Dendritic cell treated with granulocyte-macrophage colony-stimulating factor and Interleukin-4, amounts not matched to agents 40 ng/mL and 50 ng/mL, for 4 days (primary cell): ENCODE measurements at regions of chr19 and their contacts with region 1.

Region 1: DNA sequence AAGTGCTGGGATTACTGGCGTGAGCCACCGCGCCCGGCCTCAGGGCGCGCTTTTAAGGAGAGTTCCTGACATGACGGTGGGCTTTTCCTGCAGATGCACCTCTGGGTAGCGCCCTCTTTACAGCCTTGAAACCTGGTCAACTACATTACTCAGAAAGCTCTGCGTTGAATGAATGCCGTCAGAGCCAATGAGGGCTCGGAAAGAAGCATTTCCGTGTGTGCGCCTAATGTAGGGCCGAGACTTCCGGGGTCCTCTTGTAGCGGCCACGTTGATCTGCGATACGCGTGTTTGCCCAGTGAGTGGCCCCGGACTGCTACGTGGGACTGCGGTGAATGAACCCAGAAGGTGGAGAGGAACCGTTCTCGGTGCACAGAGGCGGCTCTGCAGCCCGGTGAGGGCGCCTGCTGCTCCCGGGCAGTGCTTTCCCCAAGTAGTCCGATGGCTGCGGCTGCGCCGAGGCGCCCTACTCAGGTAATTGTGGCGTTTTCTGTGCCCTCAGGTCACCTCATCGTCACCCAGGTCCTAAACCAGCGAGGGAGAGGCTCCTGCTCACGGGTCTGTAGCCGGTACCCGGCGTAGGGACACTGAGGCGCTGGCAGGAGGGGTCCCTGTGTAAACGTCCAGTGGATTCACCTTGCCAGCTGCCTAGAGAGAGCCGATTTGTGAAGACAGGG is 4.9 kb upstream of the ZNF552 start:
- H3K4me3 Mint-ChIP-seq: peak overlapping the region; percentile 94
- H3K27ac Mint-ChIP-seq: peak overlapping the region; percentile 91
- H3K4me1 Mint-ChIP-seq: peaks cover 48% of the 10 kb centered on the region
- H3K27me3 Mint-ChIP-seq: no peaks in the 10 kb centered on the region

Region 2: GRCh38 chr19:57719901-57720519 is 99.6 kb before region 1 on chr19:
- intact Hi-C with region 1: loop called (anchors 5 kb)
- H3K4me3 Mint-ChIP-seq: no peak overlapping the region
- H3K27ac Mint-ChIP-seq: no peak overlapping the region
- H3K4me1 Mint-ChIP-seq: no peaks in the 10 kb centered on the region
- H3K27me3 Mint-ChIP-seq: no peaks in the 10 kb centered on the region

Region 3: DNA sequence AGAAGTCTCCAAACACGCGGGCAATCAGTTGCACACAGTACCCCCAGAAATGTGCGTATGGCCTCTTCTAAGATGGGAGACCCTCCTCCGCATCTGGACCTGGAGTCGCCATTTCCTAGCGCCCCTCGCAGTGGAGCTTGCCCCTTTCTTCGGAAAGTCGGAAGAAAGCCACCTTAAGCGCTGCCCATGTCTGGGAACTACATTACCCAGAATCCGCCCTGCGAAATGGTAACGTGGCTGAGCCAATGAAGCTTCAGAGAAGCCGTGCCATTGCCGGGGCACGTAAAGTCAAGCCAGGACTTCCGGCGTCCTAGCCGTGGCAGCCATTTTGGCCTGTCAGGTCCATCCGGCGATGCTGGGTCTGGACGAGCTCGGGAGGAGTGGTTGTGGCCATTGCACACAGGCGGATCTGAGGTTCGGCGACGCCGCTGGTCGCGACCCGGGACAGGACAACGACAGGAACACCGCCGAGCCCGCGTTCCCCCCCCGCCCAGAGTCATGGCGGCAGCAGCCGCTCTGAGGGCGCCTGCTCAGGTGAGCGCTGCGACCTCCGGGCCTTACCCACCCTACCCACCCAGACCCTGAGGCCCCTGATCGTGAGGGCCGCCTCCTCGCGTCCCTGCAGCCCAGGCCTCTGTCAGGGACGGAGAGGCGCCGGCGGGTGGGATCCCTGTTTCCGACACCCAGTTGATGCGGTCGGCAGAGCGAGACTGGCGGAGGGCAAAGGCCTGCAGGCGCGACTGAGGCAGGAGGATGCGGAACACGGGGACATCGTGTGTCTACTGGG is 50.1 kb before region 1 on chr19 and contains the start of gene ZNF586:
- intact Hi-C with region 1: loop called (anchors 10 kb)
- H3K4me3 Mint-ChIP-seq: peak within 1 kb of the TSS; percentile 90
- H3K27ac Mint-ChIP-seq: peak within 1 kb of the TSS; percentile 88
- H3K4me1 Mint-ChIP-seq: peaks cover 24% of the 10 kb centered on the region
- H3K27me3 Mint-ChIP-seq: no peaks in the 10 kb centered on the region

Region 4: DNA sequence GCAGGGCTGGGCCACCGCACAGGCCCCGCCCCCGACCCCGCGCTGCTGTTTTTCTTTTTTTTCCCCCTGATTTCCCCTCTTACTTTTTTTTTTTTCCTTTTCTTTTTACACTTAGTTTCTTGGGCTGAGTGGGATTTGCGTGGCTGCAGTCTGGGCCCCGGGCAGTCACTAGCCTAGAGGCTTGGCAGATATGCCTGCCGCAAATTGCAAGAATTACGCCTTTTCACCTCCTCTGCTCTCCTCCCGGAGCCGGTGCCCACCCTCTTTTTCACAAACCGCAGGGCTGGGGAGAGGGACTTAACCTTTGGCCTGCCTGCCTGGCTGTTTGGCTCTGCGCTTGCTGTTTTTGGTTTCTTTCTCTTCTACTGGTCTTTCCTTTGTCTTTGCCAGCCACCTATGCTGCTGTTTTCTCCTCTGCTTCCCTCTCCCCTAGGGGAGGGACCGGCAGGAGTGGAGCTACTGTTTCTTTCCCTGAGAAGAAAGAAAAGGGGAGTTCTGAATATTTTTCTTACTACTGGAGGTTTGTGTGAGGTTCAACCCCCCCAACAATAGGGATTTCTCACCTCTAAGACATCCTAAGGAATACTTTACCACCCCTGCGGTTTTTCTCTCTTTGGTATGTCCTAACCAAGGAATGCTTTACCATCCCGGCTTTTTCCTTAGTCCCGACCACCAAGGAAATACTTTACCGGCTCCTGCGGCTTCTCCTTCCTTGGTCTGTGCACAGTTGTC is 15.9 kb before region 1 on chr19:
- intact Hi-C with region 1: no loop called
- H3K4me3 Mint-ChIP-seq: peak overlapping the region; percentile 88
- H3K27ac Mint-ChIP-seq: peak overlapping the region; percentile 83
- H3K4me1 Mint-ChIP-seq: peaks cover 42% of the 10 kb centered on the region
- H3K27me3 Mint-ChIP-seq: peaks cover 3% of the 10 kb centered on the region

Region 5: DNA sequence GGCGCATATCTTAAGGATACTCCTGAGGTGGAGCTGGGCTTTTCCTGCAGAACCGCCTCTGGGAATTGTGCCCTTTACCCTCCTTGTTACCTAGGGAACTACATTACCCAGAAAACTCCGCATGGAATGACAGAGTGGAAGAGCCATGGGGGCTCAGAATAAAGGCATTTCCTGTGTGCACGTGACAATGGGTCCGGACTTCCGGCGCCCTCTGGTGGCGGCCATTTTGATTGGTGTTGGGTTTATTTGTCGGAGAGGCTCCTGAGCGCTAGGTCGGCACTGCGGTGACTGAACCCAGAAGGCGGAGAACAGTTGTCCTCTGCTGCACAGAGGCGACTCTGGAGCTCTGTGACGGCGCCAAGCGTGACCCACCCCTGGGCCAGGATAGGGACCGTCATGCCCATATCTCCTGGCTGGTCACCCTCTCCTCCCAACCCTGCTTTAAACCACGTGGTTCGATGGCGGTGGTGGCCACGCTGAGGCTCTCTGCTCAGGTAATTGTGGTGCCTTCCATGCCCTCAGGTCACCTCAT is 10.5 kb after region 1 on chr19 and contains the start of gene ZNF587B:
- intact Hi-C with region 1: no loop called
- H3K4me3 Mint-ChIP-seq: peak within 1 kb of the TSS; percentile 23
- H3K27ac Mint-ChIP-seq: no peak within 1 kb of the TSS
- H3K4me1 Mint-ChIP-seq: peaks cover 9% of the 10 kb centered on the region
- H3K27me3 Mint-ChIP-seq: no peaks in the 10 kb centered on the region